KBM-7 (cell line): ENCODE measurements at regions of chr17 and their contacts with region 1.

Region 1: GRCh38 chr17:78759203-78759968 is 22.7 kb downstream of the CYTH1 start:
- DNase-seq: peak; percentile 92

Region 2: DNA sequence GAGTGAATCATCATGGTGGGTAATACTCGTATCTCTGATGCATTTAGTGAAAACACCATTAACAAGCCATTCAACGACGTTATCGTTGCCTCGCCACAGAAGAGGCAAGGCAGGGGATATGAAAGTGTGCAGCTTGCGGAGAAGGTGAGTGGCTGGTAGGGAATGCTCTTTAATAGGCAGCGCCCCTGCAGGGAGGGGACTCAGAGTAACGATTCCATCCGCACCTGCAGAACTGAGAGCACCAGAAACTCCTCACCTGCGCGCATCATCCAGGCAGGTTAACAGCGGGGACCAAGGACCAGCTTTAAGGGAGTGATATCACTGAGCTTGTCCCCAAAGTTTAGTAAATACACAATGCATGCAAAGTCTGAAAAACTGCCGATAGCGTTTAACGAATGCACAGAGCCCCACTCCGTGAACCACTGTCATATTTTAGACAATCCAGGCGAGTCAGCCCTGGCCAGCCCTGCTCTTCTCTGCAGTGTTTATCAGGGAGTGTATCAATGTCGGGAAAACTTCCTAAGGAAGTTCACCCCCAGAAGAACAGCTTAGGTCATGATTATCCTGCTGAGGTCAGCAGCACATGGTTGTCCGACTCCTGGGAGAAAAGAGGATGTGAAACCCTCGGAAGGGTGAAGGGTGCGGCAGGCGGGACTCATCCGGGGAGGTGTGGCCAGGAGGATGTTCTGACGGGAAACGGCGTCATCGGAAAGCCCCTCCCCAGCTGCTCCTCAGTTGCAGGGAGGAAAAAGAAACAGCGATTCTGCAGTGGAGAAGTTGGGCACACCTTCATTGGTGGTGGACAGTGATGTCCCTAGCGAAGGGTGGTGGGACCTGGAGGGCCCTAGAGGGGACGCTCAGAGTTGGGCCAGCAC is 113.7 kb before region 1 on chr17:
- in situ Hi-C with region 1: no loop called
- DNase-seq: peak; percentile 86

Region 3: GRCh38 chr17:78818932-78819331 is 59.5 kb after region 1 on chr17:
- in situ Hi-C with region 1: loop called (anchors 10 kb)
- DNase-seq: peak; percentile 91